MCF 10A (cell line): ENCODE measurements at regions of chr17 and their contacts with region 1.

Region 1: DNA sequence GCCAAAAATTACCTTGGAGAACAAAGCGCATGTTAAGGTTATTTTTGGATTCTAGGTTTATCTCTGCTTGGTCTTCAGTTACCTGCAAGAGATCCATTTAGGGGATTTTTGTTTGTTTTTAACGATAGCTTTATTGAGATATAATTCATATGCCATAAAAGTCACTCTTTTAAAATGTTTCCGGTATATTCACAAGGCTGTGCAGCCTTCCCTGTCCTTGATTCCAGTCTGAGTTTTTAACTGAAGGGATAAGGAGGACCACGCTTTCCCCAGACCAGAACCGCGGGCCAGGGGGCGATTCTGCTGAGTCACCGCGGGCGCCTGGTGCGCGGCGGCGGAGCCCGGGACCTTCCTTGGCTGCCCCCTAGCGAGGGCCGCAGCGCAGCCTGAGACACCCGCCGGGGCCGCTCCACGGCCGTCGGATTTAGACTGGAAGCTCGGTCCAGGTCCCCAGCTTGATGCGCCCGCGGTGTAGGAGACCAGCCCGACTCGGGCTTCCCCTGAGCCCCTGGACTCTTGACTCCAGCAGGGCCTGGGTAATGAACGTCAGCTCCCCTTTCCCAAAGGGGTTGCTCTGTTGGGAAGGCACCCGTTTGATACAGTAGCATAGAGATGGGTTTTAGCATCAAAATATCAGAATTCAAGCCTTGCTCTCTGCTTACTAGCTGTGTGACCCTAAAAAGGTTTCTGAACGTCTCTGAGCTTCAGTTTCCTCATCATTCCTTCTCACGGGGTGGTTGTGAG is 50.0 kb upstream of the STH start:
- DNase-seq: peak; percentile 66
- H3K4me3 Mint-ChIP-seq: peak overlapping the region; percentile 38
- H3K27ac Mint-ChIP-seq: no peak overlapping the region
- H3K4me1 Mint-ChIP-seq: no peaks in the 10 kb centered on the region
- H3K27me3 Mint-ChIP-seq: peaks cover 47% of the 10 kb centered on the region
- CTCF ChIP-seq: peak; percentile 75

Region 2: GRCh38 chr17:45666046-45666600 is 282.9 kb before region 1 on chr17:
- CTCF ChIA-PET with region 1: no interaction called
- POLR2A ChIA-PET with region 1: no interaction called
- intact Hi-C with region 1: no loop called
- DNase-seq: no peak
- H3K4me3 Mint-ChIP-seq: no peak overlapping the region
- H3K27ac Mint-ChIP-seq: no peak overlapping the region
- H3K4me1 Mint-ChIP-seq: no peaks in the 10 kb centered on the region
- H3K27me3 Mint-ChIP-seq: peaks cover 58% of the 10 kb centered on the region
- CTCF ChIP-seq: peak; percentile 28

Region 3: GRCh38 chr17:45923511-45924268 is 25.4 kb before region 1 on chr17:
- CTCF ChIA-PET with region 1: interaction called, 12 read pairs
- POLR2A ChIA-PET with region 1: no interaction called
- intact Hi-C with region 1: no loop called
- DNase-seq: peak; percentile 70
- H3K4me3 Mint-ChIP-seq: no peak overlapping the region
- H3K27ac Mint-ChIP-seq: no peak overlapping the region
- H3K4me1 Mint-ChIP-seq: no peaks in the 10 kb centered on the region
- H3K27me3 Mint-ChIP-seq: peaks cover 41% of the 10 kb centered on the region
- CTCF ChIP-seq: no peak